ENCODE measurements at regions of chr11 and their contacts with region 1.

Region 1: GRCh38 chr11:101860696-101861427 is 53.9 kb upstream of the CEP126 start:
- DNase-seq: peak in 2 of 3 donors; percentile 25 to 63
- ATAC-seq: peak; percentile 93
- H3K4me3 ChIP-seq: no peak overlapping the region
- H3K4me1 ChIP-seq: no peaks in the 10 kb centered on the region
- CTCF ChIP-seq: peak; percentile 62

Region 2: GRCh38 chr11:101944923-101945322 is 84.1 kb after region 1 on chr11:
- intact Hi-C with region 1: loop called in 1 of 2 experiments (anchors 10 kb)
- DNase-seq: no peak
- ATAC-seq: peak; percentile 45
- H3K4me3 ChIP-seq: no peak overlapping the region
- H3K4me1 ChIP-seq: no peaks in the 10 kb centered on the region
- CTCF ChIP-seq: no peak

Region 3: DNA sequence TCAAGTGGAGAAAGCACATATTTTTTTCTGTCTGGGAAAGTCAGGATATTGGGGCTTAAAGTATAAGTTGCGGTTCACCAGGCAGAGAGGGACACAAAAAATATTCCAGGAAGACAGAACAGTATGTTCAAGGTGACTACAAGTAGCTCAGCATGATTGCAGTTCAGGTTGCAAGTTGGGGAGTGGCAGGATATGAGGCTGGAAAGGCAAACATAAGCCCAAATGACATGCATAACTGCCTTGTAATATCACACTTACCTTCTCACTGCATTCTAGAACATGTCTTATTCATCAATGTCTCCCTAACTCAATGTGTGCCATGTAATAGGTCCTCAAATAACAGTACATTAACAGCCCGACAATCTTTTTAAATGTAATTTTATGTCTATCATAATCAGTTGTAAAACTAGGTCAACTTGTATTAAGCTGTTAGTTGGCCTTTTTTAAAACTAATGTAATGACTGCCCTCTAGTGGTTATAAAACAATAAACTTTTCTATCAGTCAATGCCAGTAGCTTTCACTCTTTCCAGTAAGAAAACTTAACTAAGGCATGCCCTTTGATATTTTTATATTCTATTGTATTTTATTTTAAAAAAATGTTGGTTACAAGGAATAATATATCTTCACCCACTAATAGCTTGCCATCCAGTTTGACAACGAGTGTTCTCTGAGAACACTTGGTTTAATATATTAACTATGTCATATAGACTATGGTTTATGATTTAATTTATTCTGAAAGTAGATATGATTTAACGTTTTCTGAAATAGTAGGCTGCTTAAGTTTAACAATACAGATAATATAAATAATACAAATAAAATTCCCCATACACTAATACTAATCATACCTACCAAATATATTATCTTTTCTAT is 146.9 kb after region 1 on chr11:
- intact Hi-C with region 1: loop called (anchors 2 to 5 kb)
- DNase-seq: peak in 1 of 3 donors; percentile 73
- ATAC-seq: peak; percentile 94
- H3K4me3 ChIP-seq: no peak overlapping the region
- H3K4me1 ChIP-seq: peaks cover 5% of the 10 kb centered on the region
- CTCF ChIP-seq: peak; percentile 12